Activated naive CD4-positive, alpha-beta T cell treated with anti-CD3 and anti-CD28 coated beads for 36 hours (primary cell): ENCODE measurements at regions of chr1 and their contacts with region 1.

Region 1: DNA sequence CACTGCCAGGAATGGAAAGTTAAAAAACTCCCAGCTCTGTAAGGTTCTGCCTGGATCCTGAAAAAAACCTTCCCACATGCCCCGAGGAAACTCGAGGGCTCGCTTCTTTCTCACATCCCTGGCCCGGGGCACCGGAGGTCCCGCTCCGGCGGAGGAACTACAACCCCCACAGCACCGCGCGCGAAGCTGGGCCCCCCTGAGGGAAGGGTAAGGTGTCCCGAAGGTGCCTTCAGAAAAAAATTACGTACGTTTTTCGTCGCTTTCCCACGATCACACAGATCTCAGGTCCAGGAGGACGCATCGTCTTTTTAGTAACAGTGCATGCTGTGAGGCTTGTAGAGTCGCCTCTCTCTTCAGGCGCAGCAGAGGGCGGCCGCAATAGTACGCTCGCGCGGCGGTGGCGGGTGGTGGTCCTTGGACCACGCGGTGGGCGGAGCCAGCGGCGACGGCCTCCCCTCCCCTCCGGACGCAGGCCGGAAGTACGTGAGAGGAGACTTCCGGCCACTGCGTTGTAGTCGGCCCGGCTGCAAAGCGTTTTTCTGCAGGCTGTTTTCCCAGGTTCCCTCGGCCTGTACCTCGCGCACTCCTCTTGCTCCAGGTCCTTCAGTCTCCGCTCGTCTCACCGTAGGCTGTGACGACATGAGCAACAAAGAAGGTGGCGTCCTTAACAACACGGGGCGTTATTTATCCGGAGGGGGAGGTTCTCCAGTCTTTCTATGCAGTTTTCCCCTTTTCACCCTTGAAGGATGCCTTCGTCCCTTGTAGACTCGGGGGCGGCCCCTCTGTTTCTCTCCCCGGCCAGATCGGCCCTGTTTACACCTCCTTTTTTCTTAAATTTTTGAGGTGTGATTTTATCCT is at the start of gene TSNAX:
- DNase-seq: peak; percentile 86
- H3K4me3 Mint-ChIP-seq: peak within 1 kb of the TSS; percentile 96
- H3K27ac Mint-ChIP-seq: peak within 1 kb of the TSS; percentile 97
- H3K4me1 Mint-ChIP-seq: peaks cover 47% of the 10 kb centered on the region
- H3K27me3 Mint-ChIP-seq: no peaks in the 10 kb centered on the region
- total RNA-seq, gene TSNAX: 25.7 to 28.2 TPM

Region 2: DNA sequence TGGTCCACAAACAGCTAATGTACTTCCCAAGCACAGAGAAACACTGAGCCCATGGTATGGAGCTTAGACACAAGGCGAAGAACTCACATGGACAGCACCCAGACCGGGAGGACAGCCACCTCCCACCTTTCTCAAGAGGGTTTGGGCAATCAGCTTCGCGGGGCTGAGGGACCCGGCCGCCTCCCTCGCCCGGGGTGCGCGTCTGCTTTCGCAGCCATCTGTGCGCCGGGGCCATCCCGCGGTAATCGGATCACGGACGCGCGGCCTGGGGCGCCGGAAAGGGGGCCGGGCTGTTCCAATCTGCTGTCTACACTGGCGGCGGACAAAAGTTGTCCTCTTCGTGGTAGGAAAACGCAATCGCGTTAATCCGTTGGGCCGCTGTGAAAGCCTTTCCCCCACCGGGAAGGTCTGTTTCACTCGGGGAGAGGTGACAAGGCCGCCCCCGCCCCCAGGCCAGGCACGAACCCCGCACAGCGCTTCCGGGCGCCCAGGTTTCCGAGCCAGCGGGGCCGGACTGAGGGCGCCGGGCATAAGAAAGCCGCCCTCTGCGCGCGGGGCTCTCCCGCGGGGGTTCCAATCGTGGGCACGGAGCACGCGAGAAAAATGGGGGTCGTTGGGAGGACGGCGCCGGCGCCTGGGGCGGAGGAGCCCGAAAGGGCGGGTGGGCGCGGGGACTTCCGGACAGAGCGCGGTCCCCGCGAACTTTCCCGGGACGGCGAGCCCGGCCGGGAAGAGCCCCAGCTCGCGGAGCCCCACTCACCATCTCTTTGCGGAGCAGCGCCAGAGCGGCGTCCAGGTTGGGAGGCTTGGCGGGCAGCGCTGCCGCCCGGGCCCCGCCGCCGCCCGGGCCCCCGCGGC is 489.0 kb before region 1 on chr1:
- CTCF ChIA-PET with region 1: no interaction called
- intact Hi-C with region 1: loop called (anchors 2 kb)
- DNase-seq: peak; percentile 56
- H3K4me3 Mint-ChIP-seq: peak overlapping the region; percentile 75
- H3K27ac Mint-ChIP-seq: no peak overlapping the region
- H3K4me1 Mint-ChIP-seq: peaks cover 24% of the 10 kb centered on the region
- H3K27me3 Mint-ChIP-seq: peaks cover 2% of the 10 kb centered on the region

Region 3: GRCh38 chr1:231240883-231241735 is 287.3 kb before region 1 on chr1 and contains the start of gene GNPAT:
- CTCF ChIA-PET with region 1: no interaction called
- intact Hi-C with region 1: loop called (anchors 2 kb)
- DNase-seq: peak; percentile 90
- H3K4me3 Mint-ChIP-seq: peak within 1 kb of the TSS; percentile 97
- H3K27ac Mint-ChIP-seq: peak within 1 kb of the TSS; percentile 82
- H3K4me1 Mint-ChIP-seq: peaks cover 58% of the 10 kb centered on the region
- H3K27me3 Mint-ChIP-seq: no peaks in the 10 kb centered on the region
- total RNA-seq, gene GNPAT: 60.4 to 62.0 TPM

Region 4: GRCh38 chr1:231272880-231273279 is 255.5 kb before region 1 on chr1:
- CTCF ChIA-PET with region 1: no interaction called
- intact Hi-C with region 1: loop called (anchors 5 kb)
- DNase-seq: peak; percentile 18
- H3K4me3 Mint-ChIP-seq: no peak overlapping the region
- H3K27ac Mint-ChIP-seq: peak overlapping the region; percentile 98
- H3K4me1 Mint-ChIP-seq: peaks cover 22% of the 10 kb centered on the region
- H3K27me3 Mint-ChIP-seq: no peaks in the 10 kb centered on the region

Region 5: GRCh38 chr1:231357831-231358354 is 170.5 kb before region 1 on chr1:
- CTCF ChIA-PET with region 1: interaction called, 5 read pairs
- intact Hi-C with region 1: loop called (anchors 1 kb)
- DNase-seq: peak; percentile 45
- H3K4me3 Mint-ChIP-seq: no peak overlapping the region
- H3K27ac Mint-ChIP-seq: peak overlapping the region; percentile 16
- H3K4me1 Mint-ChIP-seq: peaks cover 4% of the 10 kb centered on the region
- H3K27me3 Mint-ChIP-seq: no peaks in the 10 kb centered on the region

Region 6: DNA sequence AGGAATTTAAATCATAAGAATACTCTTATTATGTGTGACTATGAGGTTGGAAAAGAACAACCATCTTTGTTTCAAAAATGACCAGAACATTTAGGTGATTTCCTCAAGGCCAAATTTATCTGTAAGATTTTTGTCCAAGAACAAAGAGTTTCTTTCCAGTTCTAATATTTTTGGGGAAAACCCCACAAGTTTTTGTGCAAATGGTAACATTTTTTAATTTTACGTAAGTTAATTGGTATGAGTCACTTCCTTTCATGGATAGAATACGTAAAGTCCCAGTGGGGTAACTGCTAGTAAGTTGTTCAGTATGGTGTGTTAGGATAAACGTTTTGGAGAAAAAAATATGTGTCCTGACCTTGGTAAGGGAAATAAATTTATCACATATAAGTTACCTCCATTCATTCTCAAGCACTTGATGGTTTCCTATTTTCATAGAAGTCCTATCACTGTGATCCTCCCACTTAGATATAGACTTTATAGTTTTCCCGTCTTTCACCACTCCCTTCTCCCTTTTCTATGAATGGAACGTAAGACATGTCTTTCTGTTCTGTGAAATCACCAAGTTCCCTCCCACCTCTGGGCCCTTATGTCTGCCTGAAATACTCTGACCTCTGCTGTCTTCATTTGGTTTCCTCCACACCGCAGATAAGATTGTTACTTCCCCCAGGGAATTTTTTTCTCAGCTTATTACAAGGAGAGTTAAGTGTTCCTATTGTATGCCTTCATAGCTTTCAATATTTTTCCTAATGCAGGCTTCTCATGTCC is 34.8 kb before region 1 on chr1:
- CTCF ChIA-PET with region 1: no interaction called
- intact Hi-C with region 1: loop called (anchors 1 kb)
- DNase-seq: peak; percentile 35
- H3K4me3 Mint-ChIP-seq: peak overlapping the region; percentile 32
- H3K27ac Mint-ChIP-seq: peak overlapping the region; percentile 70
- H3K4me1 Mint-ChIP-seq: peaks cover 14% of the 10 kb centered on the region
- H3K27me3 Mint-ChIP-seq: peaks cover 7% of the 10 kb centered on the region

Region 7: DNA sequence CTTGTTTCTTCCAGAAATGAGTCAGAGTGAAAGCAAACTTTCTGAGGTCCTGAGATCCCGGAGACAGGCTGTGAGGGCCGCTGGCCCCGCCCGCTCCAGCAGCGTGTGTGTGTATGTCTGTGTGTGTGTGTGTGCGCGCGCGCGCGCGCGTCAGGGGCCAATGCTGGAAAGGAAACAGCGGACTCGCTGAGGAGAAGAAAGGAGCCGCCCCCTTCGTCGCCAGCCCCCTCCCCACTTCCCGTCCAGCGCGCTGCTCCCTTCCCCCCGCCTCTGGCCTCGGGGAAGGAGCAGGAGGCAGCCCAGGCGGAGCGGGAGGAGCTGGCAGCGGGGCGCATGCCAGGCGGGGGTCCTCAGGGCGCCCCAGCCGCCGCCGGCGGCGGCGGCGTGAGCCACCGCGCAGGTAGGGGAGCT is 98.1 kb after region 1 on chr1 and contains the start of gene DISC1:
- CTCF ChIA-PET with region 1: no interaction called
- intact Hi-C with region 1: loop called (anchors 5 kb)
- DNase-seq: peak; percentile 76
- H3K4me3 Mint-ChIP-seq: peak within 1 kb of the TSS; percentile 82
- H3K27ac Mint-ChIP-seq: peak within 1 kb of the TSS; percentile 78
- H3K4me1 Mint-ChIP-seq: peaks cover 28% of the 10 kb centered on the region
- H3K27me3 Mint-ChIP-seq: no peaks in the 10 kb centered on the region
- total RNA-seq, gene DISC1: 4.8 to 5.0 TPM